Activated CD8-positive, alpha-beta memory T cell treated with anti-CD3 and anti-CD28 coated beads, Interleukin-2, amount 10 ng/mL, durations not matched to agents 7 days and 5 days (primary cell): ENCODE measurements at regions of chr17 and their contacts with region 1.

Region 1: GRCh38 chr17:73371285-73371684 is 59.5 kb upstream of the CDC42EP4 start:
- DNase-seq: no peak
- ATAC-seq: no peak
- H3K4me3 Mint-ChIP-seq: no peak overlapping the region
- H3K27ac Mint-ChIP-seq: no peak overlapping the region
- H3K4me1 Mint-ChIP-seq: no peaks in the 10 kb centered on the region
- H3K27me3 Mint-ChIP-seq: peaks cover 21% of the 10 kb centered on the region

Region 2: DNA sequence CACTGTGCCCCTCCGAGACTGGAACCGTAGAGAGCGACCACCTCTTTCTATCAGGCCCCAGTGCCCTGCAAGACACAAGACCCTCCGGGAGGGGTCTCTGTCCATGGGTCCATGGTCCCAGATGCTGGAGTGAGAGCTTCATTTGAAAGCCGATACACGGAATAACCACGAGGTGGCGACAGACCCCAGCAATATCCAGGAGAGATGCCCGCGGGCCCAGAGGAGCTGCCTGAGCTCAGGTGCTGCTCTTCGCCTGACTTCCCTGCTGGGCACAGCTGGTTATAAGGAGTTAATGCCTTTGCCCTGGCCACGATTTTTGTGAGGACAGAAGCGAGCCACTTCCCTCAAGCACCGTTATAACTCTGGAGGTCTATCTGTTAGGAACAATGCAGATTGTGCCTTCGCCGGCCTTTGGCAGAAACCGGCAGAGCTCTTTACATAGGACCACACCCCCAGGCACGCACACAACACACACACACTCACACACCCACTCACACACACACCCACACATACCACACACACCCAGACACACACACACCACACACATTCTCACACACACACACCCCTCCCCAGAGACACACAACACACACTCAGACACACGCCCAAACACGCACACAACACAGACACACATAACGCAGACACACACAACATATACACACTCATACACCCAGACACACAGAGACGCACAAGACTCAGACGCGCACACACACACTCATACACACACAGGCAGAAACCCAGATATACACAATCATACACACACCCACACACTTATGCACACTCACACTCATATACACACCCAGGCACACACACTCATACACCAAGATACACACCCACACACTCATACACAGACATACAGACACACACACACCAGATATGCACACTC is 814.1 kb before region 1 on chr17:
- CTCF ChIA-PET with region 1: interaction called, 30 read pairs
- DNase-seq: peak; percentile 76
- ATAC-seq: peak; percentile 72
- H3K4me3 Mint-ChIP-seq: no peak overlapping the region
- H3K27ac Mint-ChIP-seq: no peak overlapping the region
- H3K4me1 Mint-ChIP-seq: no peaks in the 10 kb centered on the region
- H3K27me3 Mint-ChIP-seq: no peaks in the 10 kb centered on the region

Region 3: GRCh38 chr17:73231841-73232586 is 139.3 kb before region 1 on chr17:
- CTCF ChIA-PET with region 1: interaction called, 11 read pairs
- DNase-seq: peak; percentile 96
- ATAC-seq: peak; percentile 91
- H3K4me3 Mint-ChIP-seq: peak overlapping the region; percentile 85
- H3K27ac Mint-ChIP-seq: peak overlapping the region; percentile 89
- H3K4me1 Mint-ChIP-seq: peaks cover 56% of the 10 kb centered on the region
- H3K27me3 Mint-ChIP-seq: no peaks in the 10 kb centered on the region

Region 4: DNA sequence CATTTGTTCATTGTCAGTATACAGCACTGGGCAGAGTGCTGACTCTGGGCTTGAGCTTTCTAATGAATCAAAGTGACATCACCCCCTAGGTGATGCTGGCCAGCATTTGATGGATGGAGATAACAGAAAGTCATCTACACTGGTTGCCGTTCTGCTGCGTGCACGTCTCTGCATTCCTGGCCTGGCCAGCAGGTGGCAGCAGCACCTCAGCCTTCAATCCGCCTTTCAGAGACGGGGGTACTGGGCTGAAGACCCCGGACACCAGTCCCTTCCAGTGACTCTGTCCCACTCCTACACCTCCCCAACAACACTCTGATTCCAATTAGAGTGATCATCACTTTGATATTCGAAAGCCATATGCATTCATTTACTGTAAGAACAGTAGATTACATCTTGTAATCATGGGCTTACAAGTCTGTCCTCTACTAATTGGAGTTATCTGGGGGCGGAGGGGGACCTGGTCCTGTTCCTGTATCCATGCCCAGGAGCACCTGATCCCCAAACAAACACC is 115.6 kb before region 1 on chr17:
- CTCF ChIA-PET with region 1: interaction called, 65 read pairs
- DNase-seq: peak; percentile 62
- ATAC-seq: peak; percentile 84
- H3K4me3 Mint-ChIP-seq: no peak overlapping the region
- H3K27ac Mint-ChIP-seq: no peak overlapping the region
- H3K4me1 Mint-ChIP-seq: no peaks in the 10 kb centered on the region
- H3K27me3 Mint-ChIP-seq: no peaks in the 10 kb centered on the region

Region 5: GRCh38 chr17:73311781-73312641 is 59.3 kb before region 1 on chr17 and contains the start of gene CDC42EP4:
- CTCF ChIA-PET with region 1: interaction called, 17 read pairs
- DNase-seq: peak; percentile 91
- ATAC-seq: peak; percentile 96
- H3K4me3 Mint-ChIP-seq: peak within 1 kb of the TSS; percentile 80
- H3K27ac Mint-ChIP-seq: no peak within 1 kb of the TSS
- H3K4me1 Mint-ChIP-seq: peaks cover 6% of the 10 kb centered on the region
- H3K27me3 Mint-ChIP-seq: peaks cover 21% of the 10 kb centered on the region
- total RNA-seq, gene CDC42EP4: 1.3 to 1.5 TPM